Endothelial cell of umbilical vein (primary cell): ENCODE measurements at regions of chr17 and their contacts with region 1.

Region 1: GRCh38 chr17:55845385-55845784 is 94.5 kb downstream of the PCTP start:
- DNase-seq: peak; percentile 26
- H3K4me3 ChIP-seq: no peak overlapping the region
- H3K27ac ChIP-seq: no peak overlapping the region
- H3K4me1 ChIP-seq: peaks cover 3% of the 10 kb centered on the region
- H3K27me3 ChIP-seq: peaks cover 0 to 4% of the 10 kb centered on the region in 2 experiments
- CTCF ChIP-seq: peak; percentile 63 to 64
- POLR2A ChIP-seq: no peak

Region 2: GRCh38 chr17:56125830-56126819 is 280.7 kb after region 1 on chr17:
- CTCF ChIA-PET with region 1: no interaction called
- POLR2A ChIA-PET with region 1: no interaction called
- dilution Hi-C with region 1: no loop called
- intact Hi-C with region 1: loop called (anchors 1 kb)
- DNase-seq: peak; percentile 56
- H3K4me3 ChIP-seq: no peak overlapping the region
- H3K27ac ChIP-seq: no peak overlapping the region
- H3K4me1 ChIP-seq: no peaks in the 10 kb centered on the region
- H3K27me3 ChIP-seq: peaks cover 8 to 10% of the 10 kb centered on the region in 2 experiments
- CTCF ChIP-seq: peak; percentile 62 to 65
- POLR2A ChIP-seq: no peak

Region 3: DNA sequence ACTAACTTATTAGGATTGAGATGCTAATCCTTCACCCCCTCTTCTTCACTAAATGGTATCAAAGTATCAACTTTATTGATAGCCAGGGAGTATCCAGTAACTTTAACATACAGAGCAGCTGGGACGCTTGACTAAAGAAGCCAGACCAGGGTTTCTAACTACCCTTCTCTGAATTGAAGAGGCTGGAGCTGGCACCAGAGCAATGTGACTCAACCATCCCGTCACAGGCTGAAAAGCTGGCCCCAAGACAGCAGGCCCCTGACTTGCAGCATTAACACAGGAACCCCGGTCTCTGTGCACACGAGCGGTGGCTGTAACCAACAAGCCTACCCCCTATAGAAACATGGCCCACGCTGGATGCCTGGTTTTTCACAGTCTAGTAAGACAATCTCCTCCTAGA is 367.6 kb after region 1 on chr17:
- CTCF ChIA-PET with region 1: no interaction called
- POLR2A ChIA-PET with region 1: no interaction called
- dilution Hi-C with region 1: no loop called
- intact Hi-C with region 1: no loop called
- DNase-seq: no peak
- H3K4me3 ChIP-seq: no peak overlapping the region
- H3K27ac ChIP-seq: no peak overlapping the region
- H3K4me1 ChIP-seq: no peaks in the 10 kb centered on the region
- H3K27me3 ChIP-seq: peaks cover 0 to 2% of the 10 kb centered on the region in 2 experiments
- CTCF ChIP-seq: no peak
- POLR2A ChIP-seq: no peak

Region 4: GRCh38 chr17:56478836-56479447 is 633.6 kb after region 1 on chr17:
- CTCF ChIA-PET with region 1: interaction called, 7 read pairs
- POLR2A ChIA-PET with region 1: no interaction called
- dilution Hi-C with region 1: no loop called
- intact Hi-C with region 1: loop called (anchors 1 kb)
- DNase-seq: peak; percentile 44
- H3K4me3 ChIP-seq: no peak overlapping the region
- H3K27ac ChIP-seq: no peak overlapping the region
- H3K4me1 ChIP-seq: no peaks in the 10 kb centered on the region
- H3K27me3 ChIP-seq: peaks cover 0 to 7% of the 10 kb centered on the region in 2 experiments
- CTCF ChIP-seq: peak; percentile 30 to 52
- POLR2A ChIP-seq: no peak